MCF 10A (cell line): ENCODE measurements at regions of chr1 and their contacts with region 1.

Region 1: GRCh38 chr1:47997289-47998200 is at the start of gene TRABD2B:
- DNase-seq: peak; percentile 74
- H3K4me3 Mint-ChIP-seq: peak within 1 kb of the TSS; percentile 78
- H3K27ac Mint-ChIP-seq: peak within 1 kb of the TSS; percentile 76
- H3K4me1 Mint-ChIP-seq: peaks cover 33% of the 10 kb centered on the region
- H3K27me3 Mint-ChIP-seq: no peaks in the 10 kb centered on the region
- CTCF ChIP-seq: peak; percentile 85
- total RNA-seq, gene TRABD2B: 0.96 and 2.6 TPM in 2 replicates

Region 2: GRCh38 chr1:47785561-47786271 is 211.8 kb before region 1 on chr1:
- CTCF ChIA-PET with region 1: no interaction called
- POLR2A ChIA-PET with region 1: no interaction called
- intact Hi-C with region 1: loop called (anchors 1 kb)
- DNase-seq: peak; percentile 35
- H3K4me3 Mint-ChIP-seq: no peak overlapping the region
- H3K27ac Mint-ChIP-seq: no peak overlapping the region
- H3K4me1 Mint-ChIP-seq: no peaks in the 10 kb centered on the region
- H3K27me3 Mint-ChIP-seq: no peaks in the 10 kb centered on the region
- CTCF ChIP-seq: no peak

Region 3: GRCh38 chr1:47976267-47976666 is 21.3 kb before region 1 on chr1:
- CTCF ChIA-PET with region 1: no interaction called
- POLR2A ChIA-PET with region 1: no interaction called
- intact Hi-C with region 1: no loop called
- DNase-seq: no peak
- H3K4me3 Mint-ChIP-seq: no peak overlapping the region
- H3K27ac Mint-ChIP-seq: no peak overlapping the region
- H3K4me1 Mint-ChIP-seq: no peaks in the 10 kb centered on the region
- H3K27me3 Mint-ChIP-seq: no peaks in the 10 kb centered on the region
- CTCF ChIP-seq: no peak

Region 4: GRCh38 chr1:48019714-48020315 is 22.3 kb after region 1 on chr1:
- CTCF ChIA-PET with region 1: interaction called, 65 read pairs
- POLR2A ChIA-PET with region 1: interaction called, 6 read pairs
- intact Hi-C with region 1: no loop called
- DNase-seq: peak; percentile 98
- H3K4me3 Mint-ChIP-seq: no peak overlapping the region
- H3K27ac Mint-ChIP-seq: peak overlapping the region; percentile 95
- H3K4me1 Mint-ChIP-seq: peaks cover 40% of the 10 kb centered on the region
- H3K27me3 Mint-ChIP-seq: no peaks in the 10 kb centered on the region
- CTCF ChIP-seq: no peak

Region 5: GRCh38 chr1:48055876-48056764 is 58.6 kb after region 1 on chr1:
- CTCF ChIA-PET with region 1: interaction called, 141 read pairs
- POLR2A ChIA-PET with region 1: interaction called, 11 read pairs
- intact Hi-C with region 1: loop called (anchors 1 kb)
- DNase-seq: no peak
- H3K4me3 Mint-ChIP-seq: no peak overlapping the region
- H3K27ac Mint-ChIP-seq: no peak overlapping the region
- H3K4me1 Mint-ChIP-seq: peaks cover 27% of the 10 kb centered on the region
- H3K27me3 Mint-ChIP-seq: no peaks in the 10 kb centered on the region
- CTCF ChIP-seq: no peak

Region 6: GRCh38 chr1:48093696-48094528 is 96.4 kb after region 1 on chr1:
- CTCF ChIA-PET with region 1: interaction called, 17 read pairs
- POLR2A ChIA-PET with region 1: no interaction called
- intact Hi-C with region 1: no loop called
- DNase-seq: peak; percentile 79
- H3K4me3 Mint-ChIP-seq: peak overlapping the region; percentile 73
- H3K27ac Mint-ChIP-seq: no peak overlapping the region
- H3K4me1 Mint-ChIP-seq: peaks cover 18% of the 10 kb centered on the region
- H3K27me3 Mint-ChIP-seq: peaks cover 67% of the 10 kb centered on the region
- CTCF ChIP-seq: peak; percentile 79

Region 7: DNA sequence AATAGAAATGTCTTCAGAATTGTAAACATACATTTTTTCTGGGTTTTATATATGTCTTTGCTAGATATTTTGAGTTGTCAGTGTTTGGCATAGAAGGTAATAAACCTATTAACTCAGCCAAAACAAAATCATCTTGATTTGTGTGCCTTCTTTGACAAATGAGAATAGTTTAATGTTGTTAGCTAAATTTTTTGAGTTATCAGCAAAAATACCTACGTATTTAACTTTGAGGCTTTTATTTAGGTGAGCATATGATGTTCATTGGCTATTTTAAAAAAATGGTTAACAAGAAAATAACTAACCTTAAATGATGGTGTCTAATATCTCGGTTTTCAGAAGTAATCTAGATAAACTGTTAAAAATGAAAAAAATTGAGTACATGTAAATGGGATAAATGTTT is 141.7 kb after region 1 on chr1:
- CTCF ChIA-PET with region 1: no interaction called
- POLR2A ChIA-PET with region 1: no interaction called
- intact Hi-C with region 1: no loop called
- DNase-seq: no peak
- H3K4me3 Mint-ChIP-seq: no peak overlapping the region
- H3K27ac Mint-ChIP-seq: no peak overlapping the region
- H3K4me1 Mint-ChIP-seq: peaks cover 6% of the 10 kb centered on the region
- H3K27me3 Mint-ChIP-seq: no peaks in the 10 kb centered on the region
- CTCF ChIP-seq: no peak

Region 8: GRCh38 chr1:48610628-48611542 is 613.3 kb after region 1 on chr1:
- CTCF ChIA-PET with region 1: no interaction called
- POLR2A ChIA-PET with region 1: no interaction called
- intact Hi-C with region 1: no loop called
- DNase-seq: no peak
- H3K4me3 Mint-ChIP-seq: no peak overlapping the region
- H3K27ac Mint-ChIP-seq: no peak overlapping the region
- H3K4me1 Mint-ChIP-seq: no peaks in the 10 kb centered on the region
- H3K27me3 Mint-ChIP-seq: peaks cover 20% of the 10 kb centered on the region
- CTCF ChIP-seq: no peak